ENCODE measurements at regions of chr17 and their contacts with region 1.

Region 1: GRCh38 chr17:28571255-28572122 is at the start of gene PIGS:
- DNase-seq: peak; percentile 92
- ATAC-seq: peak; percentile 96
- H3K4me3 ChIP-seq: peak within 1 kb of the TSS; percentile 69 to 99 (median 86)
- H3K4me3 Mint-ChIP-seq: peak within 1 kb of the TSS; percentile 95
- H3K27ac ChIP-seq: peak within 1 kb of the TSS; percentile 74 to 80
- H3K27ac Mint-ChIP-seq: peak within 1 kb of the TSS; percentile 93
- H3K4me1 ChIP-seq: peaks cover 45 to 64% of the 10 kb centered on the region in 2 donors
- H3K4me1 Mint-ChIP-seq: peaks cover 60% of the 10 kb centered on the region
- H3K27me3 ChIP-seq: no peaks in the 10 kb centered on the region
- H3K27me3 Mint-ChIP-seq: no peaks in the 10 kb centered on the region
- CTCF ChIP-seq: no peak
- total RNA-seq, gene PIGS: 52.3 and 55.1 TPM in 2 replicates

Region 2: DNA sequence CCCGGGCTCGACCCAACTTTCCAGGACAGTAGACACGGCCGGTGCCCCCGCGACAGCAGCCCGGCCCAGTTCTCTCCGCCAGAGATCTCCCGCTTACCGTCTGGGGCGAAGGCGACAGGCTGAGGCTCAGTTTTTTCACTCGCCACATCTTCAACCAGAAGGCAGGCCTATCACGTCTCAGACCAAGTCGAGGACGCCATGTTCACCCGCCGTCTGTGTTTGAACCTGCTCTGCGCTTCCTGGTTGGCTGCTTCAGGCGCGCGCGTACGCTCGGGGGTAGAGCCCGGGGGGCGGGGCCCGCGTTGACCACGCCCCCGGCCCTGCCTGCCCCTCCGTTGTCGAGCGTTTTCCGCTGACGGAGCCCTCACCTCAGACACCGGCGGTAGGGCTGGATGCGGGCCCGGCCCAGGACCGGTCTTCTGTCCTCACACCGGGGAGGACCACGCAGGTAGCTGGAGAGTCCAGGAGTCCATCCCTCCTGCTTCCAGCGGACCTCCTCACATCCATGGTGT is 27.4 kb after region 1 on chr17 and contains the start of gene SPAG5:
- CTCF ChIA-PET with region 1: interaction called, 6 read pairs
- POLR2A ChIA-PET with region 1: interaction called, 9 read pairs
- intact Hi-C with region 1: loop called (anchors 1 kb)
- DNase-seq: peak; percentile 96
- ATAC-seq: peak; percentile 92
- H3K4me3 ChIP-seq: peak within 1 kb of the TSS; percentile 72 to 90 (median 79)
- H3K4me3 Mint-ChIP-seq: peak within 1 kb of the TSS; percentile 98
- H3K27ac ChIP-seq: peak within 1 kb of the TSS; percentile 95 to 98
- H3K27ac Mint-ChIP-seq: peak within 1 kb of the TSS; percentile 98
- H3K4me1 ChIP-seq: peaks cover 19% of the 10 kb centered on the region in 2 donors
- H3K4me1 Mint-ChIP-seq: peaks cover 24% of the 10 kb centered on the region
- H3K27me3 ChIP-seq: no peaks in the 10 kb centered on the region
- H3K27me3 Mint-ChIP-seq: no peaks in the 10 kb centered on the region
- CTCF ChIP-seq: no peak
- total RNA-seq, gene SPAG5: 8.0 and 10.1 TPM in 2 replicates

Region 3: DNA sequence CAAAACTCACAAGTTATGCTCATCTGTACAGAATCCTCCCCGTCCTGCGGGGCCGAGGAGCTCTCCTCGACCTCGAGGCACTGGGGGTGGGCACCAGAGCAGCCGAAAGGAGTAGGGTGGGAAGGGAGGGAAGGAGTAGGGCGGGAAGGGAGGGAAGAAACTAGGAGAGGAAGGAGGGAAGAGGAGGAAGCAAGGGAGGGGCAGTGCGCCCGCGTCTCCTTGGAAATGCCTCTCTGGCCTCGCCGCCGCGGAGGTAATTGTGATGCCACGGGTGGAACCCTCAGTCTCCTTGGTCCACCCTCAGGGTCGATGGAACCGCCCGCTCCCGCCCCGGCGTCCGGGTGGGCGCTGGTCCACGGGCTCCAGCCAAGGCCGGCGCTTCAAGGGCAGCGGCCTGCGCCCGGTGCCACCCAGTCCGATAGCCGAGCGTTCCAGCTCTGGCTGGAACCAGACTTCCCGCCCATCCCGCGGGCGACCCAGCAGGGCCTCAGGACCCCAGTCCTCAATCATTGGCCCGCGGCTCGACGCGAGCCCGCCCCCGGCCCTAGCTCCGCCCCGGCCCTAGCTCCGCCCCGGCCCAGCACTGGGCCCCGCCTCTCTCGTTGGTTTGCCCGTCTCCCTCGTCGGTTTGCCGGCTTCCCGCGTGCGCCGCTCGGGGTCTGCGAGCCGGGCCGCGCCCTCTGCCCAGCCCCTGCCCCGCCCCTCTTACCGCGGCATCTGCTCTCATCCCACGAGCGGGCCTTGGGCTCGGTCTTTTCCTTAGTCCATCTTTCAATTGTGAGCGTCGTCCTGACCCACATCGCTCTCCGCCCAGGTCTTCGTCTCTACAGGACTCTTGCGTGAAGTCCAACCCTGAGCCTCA is 139.6 kb after region 1 on chr17:
- CTCF ChIA-PET with region 1: no interaction called
- POLR2A ChIA-PET with region 1: interaction called, 3 read pairs
- intact Hi-C with region 1: loop called (anchors 10 kb)
- DNase-seq: peak; percentile 88
- ATAC-seq: peak; percentile 90
- H3K4me3 ChIP-seq: peak overlapping the region; percentile 54 to 88 (median 73)
- H3K4me3 Mint-ChIP-seq: peak overlapping the region; percentile 96
- H3K27ac ChIP-seq: peak overlapping the region; percentile 69 to 79
- H3K27ac Mint-ChIP-seq: peak overlapping the region; percentile 93
- H3K4me1 ChIP-seq: peaks cover 9 to 18% of the 10 kb centered on the region in 2 donors
- H3K4me1 Mint-ChIP-seq: peaks cover 19% of the 10 kb centered on the region
- H3K27me3 ChIP-seq: no peaks in the 10 kb centered on the region
- H3K27me3 Mint-ChIP-seq: no peaks in the 10 kb centered on the region
- CTCF ChIP-seq: no peak